ENCODE measurements at regions of chr7 and their contacts with region 1.

Region 1: DNA sequence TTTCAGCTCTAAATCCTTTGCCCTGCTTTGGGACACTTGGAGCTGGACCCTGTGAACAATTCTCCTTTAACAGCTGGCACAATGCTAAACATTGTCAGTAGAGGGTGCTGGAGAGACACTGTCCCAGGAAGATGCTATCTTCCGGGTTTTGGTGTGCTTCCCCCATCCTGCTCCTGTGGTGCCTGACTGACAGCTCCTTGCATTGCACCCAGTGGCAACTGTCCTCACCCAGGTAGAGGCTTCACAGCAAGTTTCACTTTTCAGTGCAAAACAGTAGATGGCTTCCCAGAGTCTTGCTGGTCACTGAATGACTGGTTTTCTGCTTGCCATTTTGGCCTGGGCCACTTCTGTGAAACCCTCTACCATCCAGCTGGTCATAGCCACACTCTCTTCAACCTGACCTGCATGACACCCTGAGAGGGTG is 77.3 kb downstream of the CDC14C start:
- DNase-seq: peak; percentile 53 to 82
- H3K4me3 ChIP-seq: no peak overlapping the region
- H3K27ac ChIP-seq: no peak overlapping the region
- H3K4me1 ChIP-seq: no peaks in the 10 kb centered on the region; a peak in 2 of 7 replicates
- H3K27me3 ChIP-seq: no peaks in the 10 kb centered on the region
- CTCF ChIP-seq: peak; percentile 61 to 95 (median 89)
- EP300 ChIP-seq: no peak; a peak in 1 of 3 replicates
- POLR2A ChIP-seq: no peak
- RAD21 ChIP-seq: peak; percentile 98

Region 2: GRCh38 chr7:49020145-49020544 is 18.5 kb after region 1 on chr7:
- CTCF ChIA-PET with region 1: interaction called, 10 read pairs
- POLR2A ChIA-PET with region 1: no interaction called
- DNase-seq: no peak
- H3K4me3 ChIP-seq: no peak overlapping the region
- H3K27ac ChIP-seq: no peak overlapping the region
- H3K4me1 ChIP-seq: peaks cover 5 to 15% (median 11%) of the 10 kb centered on the region in 4 experiments; a peak in 5 of 7 replicates
- H3K27me3 ChIP-seq: no peaks in the 10 kb centered on the region
- CTCF ChIP-seq: no peak
- EP300 ChIP-seq: no peak
- POLR2A ChIP-seq: no peak
- RAD21 ChIP-seq: no peak

Region 3: GRCh38 chr7:49029854-49030620 is 28.4 kb after region 1 on chr7:
- CTCF ChIA-PET with region 1: interaction called, 11 read pairs
- POLR2A ChIA-PET with region 1: no interaction called
- DNase-seq: no peak
- H3K4me3 ChIP-seq: no peak overlapping the region
- H3K27ac ChIP-seq: no peak overlapping the region
- H3K4me1 ChIP-seq: peaks cover 0 to 5% (median 0%) of the 10 kb centered on the region in 4 experiments; a peak in 2 of 7 replicates
- H3K27me3 ChIP-seq: no peaks in the 10 kb centered on the region
- CTCF ChIP-seq: no peak
- EP300 ChIP-seq: no peak
- POLR2A ChIP-seq: no peak
- RAD21 ChIP-seq: no peak

Region 4: DNA sequence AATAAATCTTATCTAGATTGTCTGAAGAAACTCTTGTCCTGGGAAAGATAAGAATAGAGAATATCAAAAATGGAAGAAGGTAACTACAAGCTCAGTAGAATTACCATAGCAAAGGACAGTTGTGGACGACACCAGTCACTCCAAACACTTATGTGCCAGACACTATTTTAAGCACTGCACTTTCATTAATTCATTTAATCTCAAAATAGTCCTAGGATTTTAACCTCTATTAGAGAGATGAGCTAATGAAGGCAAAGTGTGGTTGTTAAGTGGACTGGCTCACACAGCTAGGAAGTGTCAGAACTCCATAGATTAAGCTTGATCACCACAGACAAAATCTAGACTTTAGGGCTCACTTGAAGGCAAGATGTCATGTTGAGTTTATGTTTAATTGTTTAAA is 91.6 kb after region 1 on chr7:
- CTCF ChIA-PET with region 1: interaction called, 13 read pairs
- POLR2A ChIA-PET with region 1: no interaction called
- DNase-seq: no peak
- H3K4me3 ChIP-seq: no peak overlapping the region
- H3K27ac ChIP-seq: no peak overlapping the region
- H3K4me1 ChIP-seq: peaks cover 0 to 15% (median under 1%) of the 10 kb centered on the region in 4 experiments; a peak in 2 of 7 replicates
- H3K27me3 ChIP-seq: no peaks in the 10 kb centered on the region
- CTCF ChIP-seq: no peak
- EP300 ChIP-seq: no peak
- POLR2A ChIP-seq: no peak
- RAD21 ChIP-seq: no peak

Region 5: GRCh38 chr7:49166441-49166840 is 164.8 kb after region 1 on chr7:
- CTCF ChIA-PET with region 1: interaction called, 28 read pairs
- POLR2A ChIA-PET with region 1: no interaction called
- DNase-seq: peak in 1 of 2 experiments; percentile 47
- H3K4me3 ChIP-seq: no peak overlapping the region
- H3K27ac ChIP-seq: no peak overlapping the region
- H3K4me1 ChIP-seq: no peaks in the 10 kb centered on the region
- H3K27me3 ChIP-seq: no peaks in the 10 kb centered on the region; a peak in 1 of 7 replicates
- CTCF ChIP-seq: peak in 2 of 3 experiments; percentile 38 to 42; a peak in 2 of 4 replicates
- EP300 ChIP-seq: no peak
- POLR2A ChIP-seq: no peak
- RAD21 ChIP-seq: peak; percentile 67 to 79

Region 6: DNA sequence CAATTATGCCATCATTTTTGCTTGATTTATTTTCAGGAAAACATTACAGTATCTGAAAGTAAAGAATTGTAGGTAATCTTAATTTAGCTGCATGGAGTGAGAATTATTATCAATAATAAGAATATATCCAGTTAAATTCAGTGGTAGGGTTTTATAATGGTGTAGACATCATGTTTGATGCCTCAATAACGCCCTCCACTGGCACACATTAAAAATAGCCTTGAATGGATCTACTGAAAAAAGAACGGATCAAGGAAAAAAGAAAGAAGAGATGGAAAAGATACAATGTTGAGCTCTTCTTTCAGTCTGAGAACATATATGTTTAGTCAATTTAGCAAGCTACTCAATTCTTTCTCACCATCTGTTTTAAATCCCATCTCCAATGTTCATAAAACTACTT is 241.9 kb after region 1 on chr7:
- CTCF ChIA-PET with region 1: interaction called, 33 read pairs
- POLR2A ChIA-PET with region 1: no interaction called
- DNase-seq: no peak
- H3K4me3 ChIP-seq: no peak overlapping the region; a peak in 1 of 8 replicates
- H3K27ac ChIP-seq: no peak overlapping the region
- H3K4me1 ChIP-seq: peaks cover 0 to 24% (median 21%) of the 10 kb centered on the region in 4 experiments
- H3K27me3 ChIP-seq: no peaks in the 10 kb centered on the region
- CTCF ChIP-seq: peak in 2 of 3 experiments; percentile 12 to 49; a peak in 2 of 4 replicates
- EP300 ChIP-seq: no peak
- POLR2A ChIP-seq: no peak
- RAD21 ChIP-seq: peak; percentile 59 to 64

Measured in H1 (cell line).